CD4-positive, alpha-beta memory T cell (primary cell): ENCODE measurements at regions of chr2 and their contacts with region 1.

Region 1: DNA sequence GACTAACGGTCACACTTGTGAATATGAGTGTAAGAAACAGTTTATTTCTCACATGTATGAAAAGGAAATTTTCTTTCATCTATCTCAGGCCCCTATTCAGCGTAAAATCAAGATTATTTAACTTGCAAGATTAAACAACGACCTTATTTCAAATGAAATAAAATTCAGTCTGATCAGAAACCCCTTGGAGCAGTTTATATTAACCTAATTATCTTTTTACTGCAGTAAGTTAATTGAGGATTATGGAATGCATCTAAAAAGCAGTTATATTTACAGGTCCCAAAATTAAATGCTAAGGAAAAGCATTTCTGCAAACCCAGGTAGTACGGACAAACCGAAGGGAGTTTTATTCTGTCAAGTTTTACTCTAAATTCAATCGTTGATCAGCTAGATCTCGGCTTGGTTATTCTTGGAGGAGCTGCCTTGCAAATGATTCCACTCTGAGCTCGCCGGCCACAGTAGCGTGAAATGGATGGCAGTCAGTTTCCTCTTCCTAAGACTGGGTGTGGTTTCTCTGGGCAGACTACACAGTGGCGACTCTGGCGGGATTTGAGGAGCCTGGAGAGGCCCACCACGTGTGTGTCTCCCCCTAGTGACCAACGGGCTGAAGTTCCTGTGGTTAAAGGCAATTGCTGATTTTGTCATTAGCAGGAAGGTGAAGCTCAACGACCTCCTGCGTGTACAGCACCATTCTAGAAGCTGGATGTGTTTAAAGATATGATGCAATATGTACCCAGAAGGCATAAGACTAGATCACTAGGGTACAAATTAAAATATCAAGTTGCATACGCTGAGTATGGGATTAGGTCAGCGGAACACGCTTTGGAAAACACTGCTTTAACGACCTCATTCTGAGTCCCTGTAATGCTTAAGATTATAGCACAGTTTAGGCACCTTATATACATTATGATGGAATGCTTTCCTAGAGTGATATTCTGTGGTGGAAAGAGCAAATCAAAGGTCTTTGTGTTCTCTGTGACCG is 36.4 kb downstream of the PRKRA start:
- DNase-seq: peak; percentile 61 to 79 (median 71)
- H3K4me3 ChIP-seq: peak overlapping the region; percentile 80 to 86
- H3K4me3 Mint-ChIP-seq: peak overlapping the region; percentile 86 to 97 (median 92)
- H3K27ac ChIP-seq: peak overlapping the region; percentile 69
- H3K27ac Mint-ChIP-seq: peak overlapping the region; percentile 87 to 99 (median 97)
- H3K4me1 ChIP-seq: peaks cover 15% of the 10 kb centered on the region
- H3K4me1 Mint-ChIP-seq: peaks cover 11 to 32% (median 19%) of the 10 kb centered on the region in 4 donors
- H3K27me3 ChIP-seq: no peaks in the 10 kb centered on the region
- H3K27me3 Mint-ChIP-seq: peaks cover 0 to 3% of the 10 kb centered on the region in 2 donors

Region 2: DNA sequence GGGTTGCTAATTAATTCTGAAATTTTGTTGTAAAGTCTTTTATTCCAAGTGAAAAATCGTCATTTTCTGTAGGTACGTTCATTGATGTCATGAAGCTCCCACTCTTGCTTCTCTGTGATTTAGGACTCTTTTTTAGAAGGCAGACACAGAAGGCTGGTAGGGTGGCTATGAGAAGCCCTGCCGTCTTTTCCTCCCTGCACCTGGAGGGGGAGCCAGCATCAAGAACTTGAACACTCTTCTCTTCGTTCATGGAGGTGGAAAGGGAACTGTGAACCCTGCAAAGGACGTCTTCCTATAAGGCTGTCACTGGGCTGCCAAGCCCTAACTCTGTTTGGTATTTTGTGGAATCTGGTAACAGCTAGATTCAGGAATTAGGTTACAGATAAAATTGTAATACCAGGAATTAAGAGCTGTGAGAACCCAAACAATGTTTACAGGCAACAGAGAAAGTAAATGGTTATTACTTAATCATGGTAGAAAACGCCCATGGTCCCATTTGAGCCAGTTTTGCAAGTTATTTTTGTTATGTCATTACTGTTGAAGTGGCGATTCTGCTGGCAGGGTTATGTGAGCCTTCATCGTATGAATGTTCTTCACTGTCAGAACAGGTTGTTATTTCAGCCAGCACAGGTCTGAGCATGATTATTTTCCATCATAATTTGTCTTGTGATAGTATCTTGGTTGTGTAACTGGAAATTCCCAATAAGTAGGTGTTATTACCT is 108.0 kb before region 1 on chr2:
- CTCF ChIA-PET with region 1: no interaction called
- POLR2A ChIA-PET with region 1: no interaction called
- intact Hi-C with region 1: loop called (anchors 1 kb)
- DNase-seq: peak in 1 of 5 donors; percentile 3
- H3K4me3 ChIP-seq: no peak overlapping the region
- H3K4me3 Mint-ChIP-seq: peak overlapping the region in 1 of 8 donors; percentile 7
- H3K27ac ChIP-seq: no peak overlapping the region
- H3K27ac Mint-ChIP-seq: no peak overlapping the region
- H3K4me1 ChIP-seq: no peaks in the 10 kb centered on the region
- H3K4me1 Mint-ChIP-seq: peaks cover 0 to under 1% (median 0%) of the 10 kb centered on the region in 4 donors
- H3K27me3 ChIP-seq: no peaks in the 10 kb centered on the region
- H3K27me3 Mint-ChIP-seq: peaks cover 13 to 18% of the 10 kb centered on the region in 2 donors

Region 3: DNA sequence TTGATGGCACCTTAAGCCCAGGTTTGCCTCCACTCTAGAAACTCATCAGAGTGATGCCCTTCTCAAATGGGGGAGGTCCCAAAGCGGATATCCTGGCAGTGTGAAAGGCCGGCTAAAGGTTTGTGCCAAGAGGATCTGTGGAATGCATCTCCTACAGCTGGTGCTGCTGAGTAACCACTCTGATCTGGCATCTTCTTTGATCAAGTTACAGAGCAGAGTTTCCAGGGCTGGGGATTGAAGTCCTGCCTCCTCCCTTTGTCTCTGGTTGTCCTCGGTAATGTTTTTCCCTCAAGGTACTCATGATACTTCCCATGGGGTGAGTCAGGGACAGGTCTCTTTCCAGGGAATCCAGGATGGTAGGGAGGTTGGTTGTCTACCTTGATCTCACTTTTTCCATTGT is 11.8 kb after region 1 on chr2:
- CTCF ChIA-PET with region 1: interaction called, 24 read pairs
- POLR2A ChIA-PET with region 1: interaction called, 9 read pairs
- intact Hi-C with region 1: no loop called
- DNase-seq: no peak
- H3K4me3 ChIP-seq: no peak overlapping the region
- H3K4me3 Mint-ChIP-seq: no peak overlapping the region
- H3K27ac ChIP-seq: no peak overlapping the region
- H3K27ac Mint-ChIP-seq: no peak overlapping the region
- H3K4me1 ChIP-seq: no peaks in the 10 kb centered on the region
- H3K4me1 Mint-ChIP-seq: no peaks in the 10 kb centered on the region
- H3K27me3 ChIP-seq: no peaks in the 10 kb centered on the region
- H3K27me3 Mint-ChIP-seq: no peaks in the 10 kb centered on the region

Region 4: DNA sequence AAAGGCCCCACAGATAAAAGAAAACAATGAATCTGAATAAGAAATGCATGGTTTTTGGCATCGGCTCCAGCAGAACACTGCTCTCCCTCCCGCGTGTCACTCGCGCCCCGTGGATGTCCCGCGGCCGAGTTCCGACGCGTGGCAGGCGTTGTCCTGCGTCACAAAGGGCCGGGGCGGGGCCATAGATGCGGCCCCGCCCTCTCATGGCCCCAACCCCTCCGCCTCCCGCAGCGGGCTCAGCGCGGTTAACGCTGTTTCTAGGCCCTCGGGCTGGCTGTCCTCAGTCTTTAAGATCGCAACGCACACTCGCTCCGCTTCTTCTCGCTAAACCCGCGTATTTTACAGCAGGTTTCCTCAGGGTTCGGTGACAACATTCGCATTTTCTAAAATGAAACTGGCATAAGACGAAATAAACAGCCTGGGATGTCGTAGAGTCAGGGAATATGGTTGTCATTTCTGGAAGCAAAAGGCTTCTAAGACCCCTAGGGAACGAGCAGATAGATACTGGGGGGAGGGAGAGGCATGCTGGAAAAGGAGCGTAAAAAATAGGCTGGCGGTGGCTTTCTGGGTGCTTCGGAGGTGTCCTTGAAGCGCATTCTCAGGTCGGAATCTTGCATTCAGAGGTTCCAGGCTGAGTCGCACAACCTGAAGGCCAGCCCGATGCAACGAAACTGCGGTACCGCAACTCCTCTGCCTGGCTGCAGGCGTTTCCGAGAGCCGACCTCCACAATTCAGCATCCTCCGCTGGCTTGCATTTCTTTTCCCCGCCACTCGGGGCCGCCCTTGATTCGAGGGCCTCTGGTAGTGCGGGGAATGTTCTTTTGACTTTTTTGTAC is 64.1 kb after region 1 on chr2 and contains the start of gene FKBP7:
- CTCF ChIA-PET with region 1: interaction called, 8 read pairs
- POLR2A ChIA-PET with region 1: interaction called, 5 read pairs
- intact Hi-C with region 1: loop called (anchors 1 kb)
- DNase-seq: peak; percentile 80 to 88 (median 83)
- H3K4me3 ChIP-seq: peak within 1 kb of the TSS; percentile 96 to 100
- H3K4me3 Mint-ChIP-seq: peak within 1 kb of the TSS; percentile 96 to 100 (median 99)
- H3K27ac ChIP-seq: peak within 1 kb of the TSS; percentile 81
- H3K27ac Mint-ChIP-seq: peak within 1 kb of the TSS; percentile 96 to 100 (median 99)
- H3K4me1 ChIP-seq: peaks cover 41% of the 10 kb centered on the region
- H3K4me1 Mint-ChIP-seq: peaks cover 33 to 50% (median 39%) of the 10 kb centered on the region in 4 donors
- H3K27me3 ChIP-seq: no peaks in the 10 kb centered on the region
- H3K27me3 Mint-ChIP-seq: no peaks in the 10 kb centered on the region
- total RNA-seq, gene FKBP7: 0.79 to 0.80 TPM

Region 5: DNA sequence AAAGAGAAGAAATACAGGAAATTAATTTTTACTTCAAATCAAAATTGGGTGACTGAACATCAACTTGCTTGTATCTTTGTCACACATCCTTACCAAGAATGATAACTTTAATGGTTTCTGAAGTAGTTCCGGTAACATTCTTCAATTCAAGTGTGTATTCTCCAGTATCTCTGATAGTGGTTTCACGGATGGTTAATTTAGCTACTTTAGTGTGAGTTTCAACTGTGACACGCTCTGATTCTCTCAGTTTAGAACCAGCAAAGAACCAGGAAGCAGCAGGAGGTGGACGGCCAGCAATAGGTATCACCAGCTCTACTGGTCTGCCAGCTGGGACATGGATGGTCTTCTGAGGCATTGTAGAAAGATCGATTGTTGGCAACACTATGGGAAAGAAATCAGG is 128.0 kb after region 1 on chr2:
- CTCF ChIA-PET with region 1: no interaction called
- POLR2A ChIA-PET with region 1: no interaction called
- intact Hi-C with region 1: no loop called
- DNase-seq: no peak
- H3K4me3 ChIP-seq: no peak overlapping the region
- H3K4me3 Mint-ChIP-seq: no peak overlapping the region
- H3K27ac ChIP-seq: no peak overlapping the region
- H3K27ac Mint-ChIP-seq: peak overlapping the region in 1 of 7 donors; percentile 39
- H3K4me1 ChIP-seq: no peaks in the 10 kb centered on the region
- H3K4me1 Mint-ChIP-seq: peaks cover 0 to 4% (median 2%) of the 10 kb centered on the region in 4 donors
- H3K27me3 ChIP-seq: no peaks in the 10 kb centered on the region
- H3K27me3 Mint-ChIP-seq: no peaks in the 10 kb centered on the region